GM12878 (cell line): ENCODE measurements at regions of chr11 and their contacts with region 1.

Region 1: DNA sequence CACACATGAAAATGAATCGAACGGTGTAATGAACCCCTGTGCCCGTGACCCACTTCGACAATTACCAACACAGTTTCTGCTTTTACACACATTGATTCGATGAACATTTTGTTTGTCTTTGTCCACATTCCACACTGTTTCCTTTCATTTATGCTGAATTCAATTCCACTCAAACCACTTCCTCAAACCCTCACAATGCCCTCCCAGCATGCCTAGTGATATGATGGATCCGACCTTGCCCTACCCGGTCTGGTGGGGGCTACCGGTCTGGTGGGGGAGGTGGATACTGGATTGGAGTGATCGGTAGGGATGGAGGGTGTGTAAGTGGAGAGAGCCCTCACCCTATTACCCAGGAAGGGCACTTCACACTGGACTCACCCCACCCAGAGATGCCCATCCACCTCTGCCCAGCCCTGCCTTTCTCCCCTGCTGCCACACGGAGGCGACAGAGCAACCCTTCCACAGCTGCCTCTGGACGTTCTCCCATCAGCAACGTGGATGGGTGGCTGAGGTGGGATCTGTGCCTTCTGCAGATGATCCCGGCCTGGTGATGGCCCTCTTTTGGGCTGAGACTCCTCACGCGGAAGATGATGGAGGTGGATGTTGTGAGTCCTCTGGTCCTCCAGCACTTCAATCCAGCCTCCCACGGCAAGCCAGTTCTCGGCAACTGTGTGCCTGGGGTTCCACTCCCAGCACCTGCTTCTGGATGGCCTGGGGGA is 33.0 kb upstream of the P2RY2 start:
- DNase-seq: no peak
- ATAC-seq: peak; percentile 86
- H3K4me3 ChIP-seq: no peak overlapping the region
- H3K27ac ChIP-seq: no peak overlapping the region
- H3K4me1 ChIP-seq: peaks cover 26% of the 10 kb centered on the region
- H3K27me3 ChIP-seq: no peaks in the 10 kb centered on the region
- CTCF ChIP-seq: peak; percentile 96 to 97 (median 97); a peak in 5 of 6 replicates
- EP300 ChIP-seq: no peak
- POLR2A ChIP-seq: no peak
- RAD21 ChIP-seq: peak; percentile 82

Region 2: DNA sequence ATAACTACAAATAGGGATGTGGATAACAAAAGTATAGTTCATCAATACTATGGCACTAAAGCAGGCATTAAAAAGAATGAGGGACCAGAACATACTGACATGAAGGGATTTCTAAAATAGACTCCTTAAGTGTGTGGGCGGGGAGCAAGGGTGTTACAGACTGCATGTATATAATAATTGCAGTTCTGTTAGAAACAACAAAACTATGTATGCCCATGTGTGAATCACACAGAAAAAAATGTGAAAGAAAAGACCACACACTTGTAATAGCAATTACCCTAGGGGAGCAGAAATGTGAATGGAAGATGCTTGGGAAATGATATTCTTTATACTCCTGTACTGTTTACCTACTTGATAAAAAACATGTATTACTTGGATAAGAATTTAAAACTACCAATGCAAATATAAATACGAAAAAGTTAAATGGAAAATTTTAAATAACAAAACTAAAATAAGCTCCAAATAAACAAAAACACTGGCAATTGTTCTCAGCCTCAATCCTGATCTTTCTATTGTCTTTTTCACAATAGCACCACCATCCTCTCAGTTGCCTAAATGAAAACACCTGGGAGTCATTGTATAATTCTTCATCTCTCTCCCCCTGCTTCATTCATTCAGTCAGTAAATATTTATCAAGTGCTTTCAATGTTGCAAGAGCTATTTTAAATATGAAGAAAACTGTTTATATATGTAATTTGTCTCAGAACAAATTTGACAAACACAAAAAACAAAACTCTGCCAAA is 172.8 kb before region 1 on chr11:
- CTCF ChIA-PET with region 1: no interaction called
- POLR2A ChIA-PET with region 1: no interaction called
- RAD21 ChIA-PET with region 1: no interaction called
- SMC1A ChIA-PET with region 1: no interaction called
- in situ Hi-C with region 1: no loop called
- intact Hi-C with region 1: no loop called
- DNase-seq: no peak
- ATAC-seq: no peak
- H3K4me3 ChIP-seq: no peak overlapping the region
- H3K27ac ChIP-seq: no peak overlapping the region
- H3K4me1 ChIP-seq: no peaks in the 10 kb centered on the region
- H3K27me3 ChIP-seq: no peaks in the 10 kb centered on the region
- CTCF ChIP-seq: no peak
- EP300 ChIP-seq: no peak
- POLR2A ChIP-seq: no peak
- RAD21 ChIP-seq: no peak

Region 3: GRCh38 chr11:73195231-73195992 is 10.3 kb after region 1 on chr11:
- CTCF ChIA-PET with region 1: interaction called, 17 read pairs
- POLR2A ChIA-PET with region 1: no interaction called
- RAD21 ChIA-PET with region 1: interaction called, 3 read pairs
- SMC1A ChIA-PET with region 1: interaction called, 8 read pairs
- in situ Hi-C with region 1: no loop called
- intact Hi-C with region 1: no loop called
- DNase-seq: no peak
- ATAC-seq: no peak
- H3K4me3 ChIP-seq: no peak overlapping the region
- H3K27ac ChIP-seq: no peak overlapping the region
- H3K4me1 ChIP-seq: peaks cover 19% of the 10 kb centered on the region
- H3K27me3 ChIP-seq: no peaks in the 10 kb centered on the region; a peak in 1 of 4 replicates
- CTCF ChIP-seq: no peak
- EP300 ChIP-seq: no peak
- POLR2A ChIP-seq: no peak
- RAD21 ChIP-seq: no peak

Region 4: DNA sequence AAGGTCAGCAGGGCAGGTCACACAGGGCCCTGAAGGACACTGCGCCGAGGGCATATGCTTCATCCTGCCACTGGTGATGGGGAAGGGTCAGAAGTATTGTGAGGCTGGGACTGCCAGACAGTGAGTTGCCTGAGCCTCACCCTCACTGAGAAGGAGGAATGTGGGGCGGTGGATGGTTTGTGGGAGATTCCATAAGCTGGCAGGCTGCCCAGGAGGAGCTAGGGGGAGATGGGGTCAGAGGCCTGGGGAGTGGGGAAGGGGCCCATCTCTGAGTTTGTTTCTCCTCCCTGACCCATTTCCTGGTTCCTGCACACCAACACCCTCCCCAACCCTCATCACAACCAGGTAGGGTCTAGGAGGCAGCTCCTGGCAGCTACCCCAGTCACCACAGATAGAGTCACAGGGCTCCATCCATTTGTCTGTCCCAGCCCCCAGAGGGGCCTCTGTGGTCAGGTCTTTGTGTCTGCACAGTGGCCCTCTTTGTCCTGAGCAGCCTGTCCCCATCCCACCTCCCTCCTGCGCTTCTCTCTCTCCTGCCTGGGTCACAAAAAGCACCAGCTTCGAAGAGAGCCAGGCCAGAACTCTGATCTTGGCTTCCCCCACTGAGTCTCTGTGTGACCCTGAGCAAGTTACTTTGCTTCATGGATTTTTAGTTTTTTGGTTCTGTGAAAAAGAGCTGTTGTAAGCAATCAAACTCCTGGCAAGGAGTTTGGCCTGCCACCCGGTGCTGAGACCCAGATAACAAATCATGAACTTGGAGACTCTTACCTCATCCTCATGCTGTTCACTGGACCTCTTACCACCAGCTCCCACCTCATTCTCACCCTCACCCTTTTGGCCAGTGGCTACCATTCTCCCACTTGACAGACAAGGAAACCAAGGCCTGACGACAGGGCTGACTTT is 28.4 kb after region 1 on chr11:
- CTCF ChIA-PET with region 1: interaction called, 18 read pairs
- POLR2A ChIA-PET with region 1: no interaction called
- RAD21 ChIA-PET with region 1: interaction called, 12 read pairs
- SMC1A ChIA-PET with region 1: interaction called, 12 read pairs
- in situ Hi-C with region 1: no loop called
- intact Hi-C with region 1: no loop called
- DNase-seq: no peak
- ATAC-seq: no peak
- H3K4me3 ChIP-seq: no peak overlapping the region
- H3K27ac ChIP-seq: no peak overlapping the region
- H3K4me1 ChIP-seq: peaks cover 12% of the 10 kb centered on the region
- H3K27me3 ChIP-seq: no peaks in the 10 kb centered on the region; a peak in 1 of 4 replicates
- CTCF ChIP-seq: no peak
- EP300 ChIP-seq: no peak
- POLR2A ChIP-seq: no peak
- RAD21 ChIP-seq: no peak

Region 5: GRCh38 chr11:73236854-73237253 is 51.7 kb after region 1 on chr11:
- CTCF ChIA-PET with region 1: interaction called, 160 read pairs
- POLR2A ChIA-PET with region 1: interaction called, 5 read pairs
- RAD21 ChIA-PET with region 1: interaction called, 115 read pairs
- SMC1A ChIA-PET with region 1: interaction called, 188 read pairs
- in situ Hi-C with region 1: loop called (anchors 5 kb)
- intact Hi-C with region 1: loop called (anchors 1 kb)
- DNase-seq: no peak
- ATAC-seq: peak; percentile 84
- H3K4me3 ChIP-seq: no peak overlapping the region
- H3K27ac ChIP-seq: no peak overlapping the region
- H3K4me1 ChIP-seq: peaks cover 2% of the 10 kb centered on the region
- H3K27me3 ChIP-seq: no peaks in the 10 kb centered on the region
- CTCF ChIP-seq: peak; percentile 69 to 82 (median 72)
- EP300 ChIP-seq: no peak
- POLR2A ChIP-seq: no peak
- RAD21 ChIP-seq: peak; percentile 76

Region 6: GRCh38 chr11:73242251-73243079 is 57.4 kb after region 1 on chr11:
- CTCF ChIA-PET with region 1: interaction called, 160 read pairs
- POLR2A ChIA-PET with region 1: interaction called, 5 read pairs
- RAD21 ChIA-PET with region 1: interaction called, 115 read pairs
- SMC1A ChIA-PET with region 1: interaction called, 188 read pairs
- in situ Hi-C with region 1: loop called (anchors 5 kb)
- intact Hi-C with region 1: loop called (anchors 1 kb)
- DNase-seq: peak; percentile 48
- ATAC-seq: peak; percentile 97
- H3K4me3 ChIP-seq: no peak overlapping the region
- H3K27ac ChIP-seq: peak overlapping the region; percentile 46
- H3K4me1 ChIP-seq: peaks cover 18% of the 10 kb centered on the region
- H3K27me3 ChIP-seq: no peaks in the 10 kb centered on the region
- CTCF ChIP-seq: peak; percentile 73 to 90 (median 80)
- EP300 ChIP-seq: no peak
- POLR2A ChIP-seq: peak; percentile 53
- RAD21 ChIP-seq: peak; percentile 89

Region 7: DNA sequence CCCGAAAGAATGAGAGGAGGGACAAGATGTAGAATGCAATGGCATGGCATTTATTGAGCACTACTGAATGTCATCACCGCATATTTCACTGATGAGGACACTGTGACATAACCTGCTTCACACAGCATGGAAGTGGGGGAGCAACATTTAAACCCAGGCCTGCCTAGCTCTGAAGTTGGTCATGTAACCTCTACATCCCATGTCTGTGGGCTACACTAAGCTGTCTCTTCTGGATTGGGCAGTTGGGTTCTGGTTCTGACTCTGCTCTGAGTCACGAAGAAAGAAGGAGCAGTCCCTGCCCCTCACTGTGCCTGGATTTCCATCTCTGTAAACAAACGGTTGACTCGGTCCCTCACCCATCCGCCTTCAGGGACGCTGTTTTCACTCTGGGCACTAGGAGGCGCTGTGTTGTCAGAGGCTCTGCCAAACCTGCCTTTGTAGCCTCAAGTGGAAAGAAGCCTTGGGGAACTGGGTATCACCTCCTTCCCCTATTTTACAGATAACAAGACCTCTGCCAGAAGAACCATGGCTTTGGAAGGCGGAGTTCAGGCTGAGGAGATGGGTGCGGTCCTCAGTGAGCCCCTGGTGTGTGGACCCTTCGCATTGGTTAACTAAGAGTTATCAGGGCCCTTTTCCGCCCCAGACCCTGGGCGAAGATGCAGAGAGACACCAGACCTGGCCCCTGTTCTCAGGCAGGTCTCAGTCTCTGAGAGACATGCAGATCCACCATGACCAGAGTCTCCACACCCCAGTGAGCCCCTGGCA is 110.3 kb after region 1 on chr11:
- CTCF ChIA-PET with region 1: interaction called, 116 read pairs
- POLR2A ChIA-PET with region 1: no interaction called
- RAD21 ChIA-PET with region 1: interaction called, 34 read pairs
- SMC1A ChIA-PET with region 1: interaction called, 22 read pairs
- in situ Hi-C with region 1: no loop called
- intact Hi-C with region 1: no loop called
- DNase-seq: peak; percentile 31
- ATAC-seq: peak; percentile 92
- H3K4me3 ChIP-seq: no peak overlapping the region
- H3K27ac ChIP-seq: no peak overlapping the region
- H3K4me1 ChIP-seq: no peaks in the 10 kb centered on the region
- H3K27me3 ChIP-seq: no peaks in the 10 kb centered on the region; a peak in 2 of 4 replicates
- CTCF ChIP-seq: peak; percentile 92 to 99 (median 98)
- EP300 ChIP-seq: no peak
- POLR2A ChIP-seq: no peak
- RAD21 ChIP-seq: peak; percentile 79